Panc1 (cell line): ENCODE measurements at regions of chr9 and their contacts with region 1.

Region 1: DNA sequence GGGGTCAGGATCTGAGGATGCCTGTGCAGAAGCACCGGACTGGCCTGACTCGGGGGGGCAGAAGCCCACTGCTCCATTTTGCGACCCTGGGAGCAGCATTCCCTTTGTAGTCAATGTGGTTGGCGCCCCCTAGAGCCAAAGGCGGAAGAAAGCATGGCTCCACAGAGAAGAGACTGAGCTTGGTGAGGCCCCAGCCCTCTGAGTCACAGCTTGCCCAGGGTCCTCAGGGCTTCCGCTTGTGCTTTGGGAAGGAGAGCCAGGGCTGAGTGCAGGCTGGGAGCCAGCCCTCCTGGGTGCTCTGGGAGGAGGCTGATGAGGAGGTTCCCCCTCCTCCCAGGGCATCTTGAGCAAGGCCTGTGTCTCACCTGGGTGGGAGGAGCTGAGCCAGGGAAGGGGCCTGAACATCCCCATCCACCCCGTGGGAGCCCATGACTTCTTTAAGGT is 5.5 kb upstream of the AQP3 start:
- DNase-seq: no peak
- ATAC-seq: peak; percentile 74
- H3K4me3 ChIP-seq: no peak overlapping the region
- H3K27ac ChIP-seq: no peak overlapping the region
- H3K4me1 ChIP-seq: no peaks in the 10 kb centered on the region
- H3K27me3 ChIP-seq: peaks cover 2% of the 10 kb centered on the region
- CTCF ChIP-seq: no peak

Region 2: GRCh38 chr9:33480087-33480486 is 27.2 kb after region 1 on chr9:
- CTCF ChIA-PET with region 1: no interaction called
- POLR2A ChIA-PET with region 1: interaction called, 13 read pairs
- in situ Hi-C with region 1: no loop called
- intact Hi-C with region 1: no loop called
- DNase-seq: no peak
- ATAC-seq: peak; percentile 43; the same call in 1 of the 2 replicates
- H3K4me3 ChIP-seq: no peak overlapping the region
- H3K27ac ChIP-seq: no peak overlapping the region
- H3K4me1 ChIP-seq: no peaks in the 10 kb centered on the region
- H3K27me3 ChIP-seq: no peaks in the 10 kb centered on the region
- CTCF ChIP-seq: no peak